ENCODE measurements at regions of chr16 and their contacts with region 1.

Region 1: DNA sequence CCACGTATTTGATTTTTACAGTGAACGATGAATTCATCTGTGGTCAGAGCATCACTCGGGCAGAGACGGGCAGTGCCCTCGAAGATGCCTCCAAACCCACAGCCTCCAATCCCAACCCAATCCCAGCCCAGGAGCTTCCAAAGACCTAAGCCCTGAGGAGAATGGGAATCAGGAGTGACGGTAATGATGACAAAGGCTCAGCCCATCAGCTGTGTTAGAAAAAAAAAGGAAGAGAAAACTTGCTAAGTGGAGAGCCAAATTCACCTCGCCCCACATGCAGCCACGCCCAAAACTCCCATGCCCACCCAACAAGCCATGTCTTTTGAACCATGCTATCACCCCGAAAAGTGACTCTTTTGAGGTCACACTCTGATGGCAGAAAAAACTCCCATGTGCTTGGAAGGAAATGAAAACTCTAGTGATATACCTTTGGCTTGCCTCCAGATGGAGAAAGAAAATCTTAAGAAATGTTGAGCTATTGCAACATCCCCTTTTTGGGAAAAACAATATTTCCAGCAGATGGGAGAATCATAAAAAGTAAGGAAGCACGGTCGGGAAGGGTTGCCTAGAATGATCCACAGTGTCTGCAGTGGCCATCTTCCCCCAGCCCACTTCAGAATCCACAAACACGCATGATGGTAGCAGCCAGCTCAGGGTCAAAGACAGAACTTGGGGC is 37.7 kb downstream of the XYLT1 start:
- DNase-seq: no peak
- ATAC-seq: no peak
- H3K4me3 ChIP-seq: no peak overlapping the region
- H3K4me3 Mint-ChIP-seq: no peak overlapping the region
- H3K27ac ChIP-seq: no peak overlapping the region
- H3K27ac Mint-ChIP-seq: no peak overlapping the region
- H3K4me1 ChIP-seq: peaks cover 12% of the 10 kb centered on the region
- H3K4me1 Mint-ChIP-seq: peaks cover 52 to 68% of the 10 kb centered on the region in 2 donors
- H3K27me3 ChIP-seq: no peaks in the 10 kb centered on the region
- H3K27me3 Mint-ChIP-seq: no peaks in the 10 kb centered on the region
- CTCF ChIP-seq: no peak

Region 2: GRCh38 chr16:17389384-17389783 is 43.7 kb before region 1 on chr16:
- intact Hi-C with region 1: loop called (anchors 5 kb)
- DNase-seq: no peak
- ATAC-seq: no peak
- H3K4me3 ChIP-seq: no peak overlapping the region
- H3K4me3 Mint-ChIP-seq: no peak overlapping the region
- H3K27ac ChIP-seq: no peak overlapping the region
- H3K27ac Mint-ChIP-seq: no peak overlapping the region
- H3K4me1 ChIP-seq: peaks cover 13% of the 10 kb centered on the region
- H3K4me1 Mint-ChIP-seq: peaks cover 59 to 77% of the 10 kb centered on the region in 2 donors
- H3K27me3 ChIP-seq: no peaks in the 10 kb centered on the region
- H3K27me3 Mint-ChIP-seq: no peaks in the 10 kb centered on the region
- CTCF ChIP-seq: no peak

Measured in natural killer cell (primary cell).